Right cardiac atrium (tissue), 5 donors: ENCODE measurements at regions of chr11 and their contacts with region 1.

Region 1: DNA sequence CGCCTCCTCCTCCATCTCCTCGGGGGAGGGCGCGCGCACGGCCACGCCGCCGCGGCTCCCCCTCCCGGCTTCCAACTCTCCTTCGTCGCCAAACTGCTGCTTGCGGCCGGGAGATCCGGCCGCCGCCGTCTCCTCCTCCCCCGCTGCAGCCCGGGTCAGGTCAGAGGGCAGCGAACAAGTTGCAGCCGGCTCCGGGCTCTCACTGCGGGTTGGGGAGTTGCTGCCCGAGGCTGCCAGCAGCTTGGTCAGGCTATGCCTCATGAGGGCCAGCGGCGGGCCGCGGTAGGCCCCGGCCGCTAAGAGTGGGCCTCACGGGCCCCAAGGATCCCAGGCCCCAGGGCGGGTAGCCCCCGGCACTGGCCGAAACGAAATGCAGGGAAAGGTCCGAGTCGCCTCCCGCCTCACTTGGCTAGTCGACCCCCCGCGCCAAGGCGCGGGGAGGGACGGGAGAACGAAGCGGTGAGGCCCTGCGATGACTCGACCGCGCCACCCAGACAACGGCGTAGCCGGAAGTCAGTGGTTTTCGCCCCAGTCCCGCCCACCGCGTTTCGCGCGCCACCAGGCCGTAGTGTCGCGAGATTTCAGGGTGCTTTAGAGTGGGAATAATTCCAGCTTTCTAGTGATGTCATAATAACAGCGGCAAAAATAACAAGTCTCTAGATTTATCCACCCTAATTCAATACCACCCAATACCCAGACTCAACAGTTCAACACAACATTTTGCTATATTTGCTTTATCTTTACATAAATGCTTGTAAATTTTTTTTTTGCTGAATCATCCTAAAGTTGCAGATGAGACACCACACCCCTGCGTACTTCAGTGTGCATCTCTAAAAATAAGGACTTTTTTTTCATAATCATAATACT is at the start of gene CREBZF:
- DNase-seq: peak; percentile 95 to 98 (median 97)
- ATAC-seq: peak; percentile 97 to 98
- H3K4me3 ChIP-seq: peak within 1 kb of the TSS; percentile 84
- H3K27ac ChIP-seq: peak within 1 kb of the TSS; percentile 99
- H3K4me1 ChIP-seq: no peaks in the 10 kb centered on the region
- H3K27me3 ChIP-seq: no peaks in the 10 kb centered on the region
- total RNA-seq, gene CREBZF: 16.1 to 19.9 (median 18.2) TPM

Region 2: DNA sequence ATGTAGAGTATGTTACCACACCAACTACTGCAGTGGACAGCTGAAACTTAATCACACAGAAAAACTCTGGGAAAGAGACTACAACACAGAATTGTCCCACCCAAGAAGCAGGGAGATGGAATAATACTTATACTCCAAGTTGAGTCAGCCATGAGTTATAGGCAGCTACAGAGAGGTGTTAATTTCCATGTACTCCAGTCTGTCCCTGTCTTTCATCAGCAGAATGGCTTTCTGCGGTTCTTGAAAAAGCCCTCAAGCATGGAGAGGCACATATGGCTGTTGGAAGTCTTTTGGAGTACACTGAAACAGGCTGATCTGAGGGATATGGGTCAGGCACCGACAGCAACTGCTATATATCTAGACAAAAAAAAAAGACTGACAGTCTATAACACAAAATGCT is 257.2 kb before region 1 on chr11:
- intact Hi-C with region 1: no loop called
- DNase-seq: no peak
- ATAC-seq: no peak
- H3K4me3 ChIP-seq: no peak overlapping the region
- H3K27ac ChIP-seq: no peak overlapping the region
- H3K4me1 ChIP-seq: no peaks in the 10 kb centered on the region
- H3K27me3 ChIP-seq: no peaks in the 10 kb centered on the region

Region 3: GRCh38 chr11:85595285-85595884 is 69.5 kb before region 1 on chr11:
- intact Hi-C with region 1: no loop called
- DNase-seq: no peak
- ATAC-seq: peak in 1 of 2 donors; percentile 59
- H3K4me3 ChIP-seq: no peak overlapping the region
- H3K27ac ChIP-seq: no peak overlapping the region
- H3K4me1 ChIP-seq: no peaks in the 10 kb centered on the region
- H3K27me3 ChIP-seq: no peaks in the 10 kb centered on the region

Region 4: DNA sequence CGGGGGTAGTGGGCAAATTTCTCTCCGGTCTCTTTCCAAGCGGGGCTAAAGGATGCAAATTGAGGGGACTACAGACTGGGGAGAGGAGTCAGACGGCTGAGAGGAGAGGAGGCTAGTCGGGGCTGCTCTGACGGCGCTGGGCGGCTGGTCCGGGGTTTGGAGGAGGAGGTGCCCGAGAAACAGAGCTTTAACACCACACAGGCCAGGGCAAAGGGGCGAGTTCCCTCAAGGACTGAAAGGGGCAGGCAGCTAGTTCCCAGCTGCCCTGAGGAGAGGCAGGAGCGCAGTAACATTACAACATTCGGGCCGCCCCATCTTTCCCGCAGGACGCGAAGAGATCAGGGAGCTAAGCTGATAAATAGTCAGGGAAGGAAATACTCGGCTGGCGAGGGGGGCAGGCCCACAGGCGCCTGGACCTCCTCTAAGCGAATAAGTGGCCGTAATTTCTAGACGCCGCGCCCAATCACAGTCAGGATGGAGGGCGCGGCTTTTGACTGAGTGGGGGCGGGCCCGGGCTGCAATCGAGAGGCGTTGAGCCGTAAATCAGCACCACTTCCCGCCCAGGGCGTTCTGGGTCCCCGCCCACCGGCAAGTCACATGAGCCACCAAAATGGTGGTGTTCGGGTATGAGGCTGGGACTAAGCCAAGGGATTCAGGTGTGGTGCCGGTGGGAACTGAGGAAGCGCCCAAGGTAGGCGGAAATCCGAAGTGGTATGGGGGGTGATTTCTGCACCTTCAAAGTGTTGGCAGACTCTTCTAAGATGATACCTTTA is 36.7 kb before region 1 on chr11 and contains the start of gene TMEM126B:
- intact Hi-C with region 1: loop called in 2 of 4 experiments (anchors 2 to 5 kb)
- DNase-seq: peak; percentile 98 to 99 (median 99)
- ATAC-seq: peak; percentile 100
- H3K4me3 ChIP-seq: peak within 1 kb of the TSS; percentile 95
- H3K27ac ChIP-seq: peak within 1 kb of the TSS; percentile 92
- H3K4me1 ChIP-seq: peaks cover 4% of the 10 kb centered on the region
- H3K27me3 ChIP-seq: no peaks in the 10 kb centered on the region
- total RNA-seq, gene TMEM126B: 46.7 to 67.7 (median 54.8) TPM

Region 5: GRCh38 chr11:85826116-85826855 is 161.4 kb after region 1 on chr11:
- intact Hi-C with region 1: no loop called
- DNase-seq: peak; percentile 20 to 69 (median 68)
- ATAC-seq: peak; percentile 64 to 81
- H3K4me3 ChIP-seq: no peak overlapping the region
- H3K27ac ChIP-seq: no peak overlapping the region
- H3K4me1 ChIP-seq: peaks cover 3% of the 10 kb centered on the region
- H3K27me3 ChIP-seq: no peaks in the 10 kb centered on the region